ENCODE measurements at regions of chr13 and their contacts with region 1.

Region 1: DNA sequence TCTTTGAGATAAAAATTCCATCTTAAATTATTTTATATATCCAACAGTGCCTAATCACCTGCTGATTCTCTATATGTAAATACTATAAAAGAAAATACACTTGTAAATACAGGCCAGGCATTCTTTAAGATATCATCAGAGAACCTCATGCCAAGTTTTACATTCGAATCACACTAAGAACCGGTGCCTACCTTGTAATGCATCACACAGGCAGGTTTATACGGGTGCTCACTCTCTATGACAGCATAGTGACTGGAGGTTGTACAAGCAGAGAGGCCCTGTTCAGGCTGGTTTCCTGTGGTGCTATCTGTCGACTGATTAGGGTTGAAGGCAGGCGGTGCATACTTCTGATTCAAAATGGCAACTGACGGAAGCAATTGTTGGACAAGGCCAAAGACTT is 141.3 kb upstream of the FBXL3 start:
- DNase-seq: no peak
- ATAC-seq: no peak
- H3K4me3 ChIP-seq: no peak overlapping the region
- H3K27ac ChIP-seq: no peak overlapping the region
- H3K4me1 ChIP-seq: no peaks in the 10 kb centered on the region
- H3K27me3 ChIP-seq: no peaks in the 10 kb centered on the region
- CTCF ChIP-seq: no peak
- POLR2A ChIP-seq: no peak
- RAD21 ChIP-seq: no peak

Region 2: GRCh38 chr13:77118134-77118533 is 50.1 kb before region 1 on chr13:
- CTCF ChIA-PET with region 1: no interaction called
- POLR2A ChIA-PET with region 1: no interaction called
- dilution Hi-C with region 1: no loop called
- in situ Hi-C with region 1: no loop called
- intact Hi-C with region 1: loop called (anchors 5 kb)
- DNase-seq: no peak
- ATAC-seq: no peak
- H3K4me3 ChIP-seq: no peak overlapping the region
- H3K27ac ChIP-seq: no peak overlapping the region
- H3K4me1 ChIP-seq: no peaks in the 10 kb centered on the region
- H3K27me3 ChIP-seq: no peaks in the 10 kb centered on the region
- CTCF ChIP-seq: no peak
- POLR2A ChIP-seq: no peak
- RAD21 ChIP-seq: no peak

Measured in IMR-90 (cell line).